Activated naive CD4-positive, alpha-beta T cell treated with anti-CD3 and anti-CD28 coated beads for 36 hours (primary cell): ENCODE measurements at regions of chr17 and their contacts with region 1.

Region 1: DNA sequence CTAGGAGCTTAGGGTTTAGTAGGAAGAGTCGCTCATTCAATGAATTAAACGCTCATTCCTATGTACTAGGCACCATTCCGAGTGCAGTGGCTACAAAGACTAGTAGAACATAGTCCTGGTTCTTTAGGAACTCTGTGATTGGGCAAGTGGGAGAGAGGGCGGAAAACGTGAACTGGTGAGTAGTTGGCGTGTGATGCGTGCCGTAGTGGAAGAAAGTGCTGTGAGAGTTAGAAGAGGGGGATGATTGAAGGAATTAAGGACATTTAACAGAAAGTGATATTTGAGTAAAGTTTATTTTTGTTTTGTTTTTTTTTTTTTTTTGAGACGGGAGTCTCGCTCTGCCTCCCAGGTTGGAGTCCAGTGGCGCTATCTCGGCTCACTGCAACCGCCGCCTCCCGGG is 7.9 kb upstream of the SLFN14 start:
- DNase-seq: peak; percentile 54
- H3K4me3 Mint-ChIP-seq: peak overlapping the region; percentile 82
- H3K27ac Mint-ChIP-seq: peak overlapping the region; percentile 86
- H3K4me1 Mint-ChIP-seq: peaks cover 29% of the 10 kb centered on the region
- H3K27me3 Mint-ChIP-seq: no peaks in the 10 kb centered on the region

Region 2: GRCh38 chr17:35587074-35587971 is 18.8 kb after region 1 on chr17 and contains the start of gene AP2B1:
- CTCF ChIA-PET with region 1: no interaction called
- intact Hi-C with region 1: loop called (anchors 1 kb)
- DNase-seq: peak; percentile 97
- H3K4me3 Mint-ChIP-seq: peak within 1 kb of the TSS; percentile 97
- H3K27ac Mint-ChIP-seq: peak within 1 kb of the TSS; percentile 97
- H3K4me1 Mint-ChIP-seq: peaks cover 29% of the 10 kb centered on the region
- H3K27me3 Mint-ChIP-seq: no peaks in the 10 kb centered on the region
- total RNA-seq, gene AP2B1: 158 to 172 TPM

Region 3: DNA sequence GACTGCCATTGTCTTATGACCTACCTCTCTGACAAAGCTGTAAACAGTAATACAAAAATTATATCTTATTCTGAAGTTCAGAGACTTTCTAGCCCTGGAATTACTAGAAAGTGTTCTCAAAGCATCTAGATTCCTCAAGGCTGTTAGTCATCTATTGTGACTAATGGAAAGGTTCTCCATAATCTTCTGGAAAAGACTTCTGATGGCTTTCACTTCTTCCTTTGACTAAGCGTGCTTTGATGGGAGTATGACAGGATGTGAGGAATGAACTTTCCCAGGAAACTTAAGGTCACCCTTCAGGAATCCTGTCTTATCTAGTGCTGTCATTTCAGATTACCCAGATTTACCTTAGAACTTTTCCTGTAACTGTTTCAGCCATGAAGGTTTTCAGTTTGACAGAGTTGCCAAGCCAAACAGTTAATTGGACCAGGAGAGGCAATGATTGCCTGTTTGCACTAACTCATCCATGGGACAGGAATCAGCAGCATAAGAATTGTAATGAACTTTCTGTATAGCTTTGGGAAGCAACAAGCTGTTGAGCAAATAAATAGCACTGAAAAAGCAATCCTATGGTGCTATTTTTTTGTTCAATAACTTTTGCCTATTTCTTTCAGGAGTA is 62.1 kb after region 1 on chr17:
- CTCF ChIA-PET with region 1: no interaction called
- intact Hi-C with region 1: no loop called
- DNase-seq: no peak
- H3K4me3 Mint-ChIP-seq: no peak overlapping the region
- H3K27ac Mint-ChIP-seq: no peak overlapping the region
- H3K4me1 Mint-ChIP-seq: peaks cover 10% of the 10 kb centered on the region
- H3K27me3 Mint-ChIP-seq: no peaks in the 10 kb centered on the region